ENCODE measurements at regions of chr18 and their contacts with region 1.

Region 1: GRCh38 chr18:12657684-12658425 is at the start of gene SPIRE1:
- ATAC-seq: peak; percentile 70 to 90 (median 88)
- H3K4me3 ChIP-seq: peak within 1 kb of the TSS; percentile 69 to 91 (median 82)
- H3K27ac ChIP-seq: peak within 1 kb of the TSS; percentile 88 to 89
- H3K4me1 ChIP-seq: peaks cover 14 to 15% of the 10 kb centered on the region in 2 donors
- total RNA-seq, gene SPIRE1: 10.2 to 46.3 (median 21.0) TPM

Region 2: DNA sequence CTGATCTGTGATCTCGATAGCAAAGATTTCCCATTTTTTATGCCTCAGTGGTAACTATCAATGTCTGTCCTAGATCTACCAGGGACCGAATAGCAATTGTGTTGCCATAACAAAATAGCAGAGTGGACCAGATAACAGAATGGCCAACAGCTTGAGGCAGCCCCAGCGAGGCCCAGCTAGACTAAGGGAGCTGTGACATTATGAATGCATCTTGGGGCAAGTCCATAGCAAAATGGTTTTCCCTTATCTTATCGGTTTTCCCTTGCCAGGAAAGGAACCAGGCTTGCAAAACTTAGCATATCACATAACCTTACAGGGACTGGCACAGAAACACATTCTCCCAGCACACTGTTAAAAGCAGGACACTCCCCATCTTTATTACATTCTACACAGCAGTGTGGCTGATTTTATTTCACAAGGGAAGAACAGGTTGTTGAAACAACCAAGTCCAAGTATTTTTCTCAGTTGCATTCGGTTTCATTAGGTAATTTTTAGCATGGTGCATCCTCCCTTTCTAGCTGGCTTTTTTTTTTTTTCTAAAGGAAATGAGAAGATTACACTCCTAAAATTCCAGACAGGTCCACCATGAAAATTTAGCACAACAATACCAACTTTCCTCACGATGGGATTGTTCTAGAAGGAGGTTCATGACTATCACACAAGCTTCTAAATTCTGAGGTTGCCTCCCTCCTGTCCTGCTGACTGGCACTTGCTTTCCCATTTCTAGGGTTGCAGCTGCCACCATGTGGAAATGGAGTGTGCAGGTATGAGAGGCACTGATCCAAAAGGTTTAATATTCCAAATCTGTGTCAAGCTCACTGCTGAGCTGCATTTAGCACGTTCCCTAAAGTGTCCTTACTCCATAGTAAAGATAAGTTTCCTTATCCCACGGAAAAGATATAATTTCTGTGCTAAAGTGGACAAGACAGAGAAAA is 1145.5 kb before region 1 on chr18:
- in situ Hi-C with region 1: no loop called
- ATAC-seq: peak in 2 of 8 experiments; percentile 45 to 65
- H3K4me3 ChIP-seq: no peak overlapping the region
- H3K27ac ChIP-seq: no peak overlapping the region
- H3K4me1 ChIP-seq: no peaks in the 10 kb centered on the region

Region 3: GRCh38 chr18:12376718-12377555 is 280.9 kb before region 1 on chr18 and contains the start of gene AFG3L2:
- in situ Hi-C with region 1: loop called in 7 of 9 experiments (anchors 10 to 25 kb)
- ATAC-seq: peak; percentile 78 to 89 (median 86)
- H3K4me3 ChIP-seq: peak within 1 kb of the TSS; percentile 56 to 76 (median 61)
- H3K27ac ChIP-seq: peak within 1 kb of the TSS; percentile 90 to 97
- H3K4me1 ChIP-seq: peaks cover 6 to 15% of the 10 kb centered on the region in 2 donors
- total RNA-seq, gene AFG3L2: 27.1 to 83.7 (median 40.9) TPM

Region 4: DNA sequence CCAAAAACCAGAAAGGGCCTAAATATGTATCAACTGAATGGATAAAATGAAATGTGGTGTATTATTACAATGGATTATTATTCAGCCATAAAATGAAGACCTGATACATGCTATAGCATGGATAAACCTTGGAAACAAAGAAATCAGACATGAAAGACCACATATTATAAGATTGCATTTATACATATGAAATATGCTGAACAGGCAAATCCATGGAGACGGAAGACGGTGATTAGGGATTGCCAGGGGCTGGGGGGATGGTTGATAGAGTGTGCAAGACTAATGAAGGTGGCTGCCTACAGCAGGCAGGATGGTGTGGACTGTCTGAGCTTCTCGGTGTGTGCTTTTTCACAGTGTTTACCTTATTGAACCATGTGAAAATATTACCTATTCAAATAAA is 269.4 kb before region 1 on chr18:
- in situ Hi-C with region 1: loop called in 7 of 9 experiments (anchors 10 to 25 kb)
- ATAC-seq: no peak
- H3K4me3 ChIP-seq: no peak overlapping the region
- H3K27ac ChIP-seq: no peak overlapping the region
- H3K4me1 ChIP-seq: peaks cover 0 to 3% of the 10 kb centered on the region in 2 donors

Region 5: GRCh38 chr18:12408247-12408869 is 249.5 kb before region 1 on chr18:
- in situ Hi-C with region 1: loop called in 2 of 9 experiments (anchors 10 kb)
- ATAC-seq: peak in 4 of 8 experiments; percentile 1 to 12 (median 6)
- H3K4me3 ChIP-seq: peak overlapping the region; percentile 41 to 48 (median 42)
- H3K27ac ChIP-seq: peak overlapping the region; percentile 72 to 85
- H3K4me1 ChIP-seq: peaks cover 15 to 18% of the 10 kb centered on the region in 2 donors

Region 6: DNA sequence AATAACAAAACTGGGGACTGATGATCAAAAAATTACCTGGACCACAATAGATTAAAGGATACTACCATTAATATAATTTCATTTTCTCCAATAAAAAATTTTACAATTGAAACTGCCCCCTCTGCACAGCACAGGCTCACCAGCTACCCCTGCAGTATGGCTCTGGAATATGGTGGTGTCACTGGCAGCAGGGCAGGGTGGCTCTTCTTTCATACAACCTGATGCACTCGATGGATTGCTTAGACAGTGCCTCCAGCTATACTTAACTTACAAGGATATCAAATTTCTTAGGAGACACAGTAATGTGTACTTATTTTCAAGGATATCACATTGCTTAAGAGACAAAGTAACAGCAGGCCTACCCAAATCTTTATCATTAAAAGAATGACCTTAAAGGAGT is 126.1 kb before region 1 on chr18:
- in situ Hi-C with region 1: no loop called
- ATAC-seq: peak in 3 of 8 experiments; percentile 27 to 76 (median 65)
- H3K4me3 ChIP-seq: no peak overlapping the region
- H3K27ac ChIP-seq: no peak overlapping the region
- H3K4me1 ChIP-seq: no peaks in the 10 kb centered on the region